GM10248 (cell line): ENCODE measurements at regions of chr19 and their contacts with region 1.

Region 1: GRCh38 chr19:35740423-35741202 is 1.6 kb downstream of the IGFLR1 start:
- DNase-seq: peak; percentile 98
- CTCF ChIP-seq: peak; percentile 37

Region 2: DNA sequence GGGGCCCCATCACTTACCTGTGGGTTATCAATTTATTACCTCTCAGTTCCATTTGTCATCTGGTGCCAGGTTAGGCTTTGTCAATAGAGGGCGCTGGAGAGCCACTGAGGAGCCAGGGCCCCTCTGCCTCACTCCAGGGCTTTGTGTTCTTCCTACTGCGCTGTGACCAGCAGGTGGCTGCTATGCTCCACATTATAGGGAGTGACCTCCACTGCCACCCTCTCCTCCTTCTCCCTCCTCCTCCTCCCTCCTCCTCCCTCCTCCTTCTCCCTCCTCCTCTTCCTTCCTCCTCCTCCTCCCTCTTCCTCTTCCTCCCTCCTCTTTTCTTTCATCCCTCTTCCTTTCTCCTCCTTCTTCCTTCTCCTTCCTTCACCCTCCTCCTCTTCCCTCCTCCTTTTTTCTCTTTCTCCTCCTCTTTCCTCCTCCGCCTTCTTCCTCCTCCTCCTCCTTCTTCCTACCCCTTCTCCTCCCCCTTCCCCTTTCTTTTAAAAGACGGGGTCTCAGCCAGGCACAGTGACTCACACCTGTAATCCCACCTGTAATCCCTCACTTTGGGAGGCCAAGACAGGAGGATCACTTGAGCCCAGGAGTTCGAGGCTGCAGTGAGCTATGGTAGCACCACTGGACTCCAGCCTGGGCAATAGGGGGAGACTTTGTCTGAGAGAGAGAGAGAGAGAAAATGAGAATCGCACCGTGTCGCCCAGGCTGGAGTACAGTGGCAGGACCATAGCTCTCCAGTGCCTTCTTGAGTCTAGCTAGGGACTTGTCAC is 46.6 kb before region 1 on chr19:
- CTCF ChIA-PET with region 1: interaction called, 14 read pairs
- POLR2A ChIA-PET with region 1: interaction called, 6 read pairs
- DNase-seq: peak; percentile 88
- CTCF ChIP-seq: peak; percentile 99

Region 3: DNA sequence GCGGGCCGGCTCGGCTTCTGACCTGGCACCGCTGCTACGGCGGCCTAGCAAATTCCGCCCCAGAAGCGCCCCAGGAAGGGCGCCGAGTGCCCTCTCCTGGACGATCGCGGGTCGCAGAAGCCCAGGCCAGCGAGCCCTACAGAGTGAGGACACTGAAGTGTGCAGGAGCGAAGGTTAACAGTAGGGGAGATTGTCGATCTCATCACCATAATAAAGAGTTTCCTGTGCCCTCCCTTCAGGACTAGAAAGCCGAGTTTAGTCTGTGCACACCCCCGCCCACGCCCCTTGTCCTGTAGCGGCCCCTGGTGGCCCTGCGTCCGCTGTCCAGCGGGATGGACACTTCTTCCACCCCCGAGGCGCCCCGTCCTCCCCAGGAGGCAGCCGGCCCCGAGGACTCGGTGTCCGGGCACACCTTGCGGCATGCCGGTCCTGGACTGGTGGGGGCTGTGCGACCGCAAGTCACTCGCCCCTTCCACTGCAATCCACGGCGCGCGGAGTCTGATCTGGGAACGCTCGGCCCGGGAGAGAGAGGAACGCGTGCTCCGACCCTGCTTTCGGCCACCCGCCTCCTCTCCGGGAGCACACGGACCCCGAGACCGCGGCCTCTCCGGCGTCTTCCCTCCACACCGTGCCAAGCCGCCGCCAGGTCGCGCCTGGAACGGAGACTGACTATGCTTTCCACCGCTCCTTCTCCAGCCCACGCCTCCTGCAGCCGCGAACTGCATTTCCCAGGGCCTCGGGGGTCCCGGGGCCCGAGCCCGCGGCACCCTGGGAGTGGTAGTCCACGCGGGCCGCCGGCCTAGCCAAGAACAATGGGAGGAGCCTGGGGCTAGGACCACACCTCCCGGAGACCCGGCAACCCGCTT is 23.6 kb before region 1 on chr19:
- CTCF ChIA-PET with region 1: interaction called, 5 read pairs
- POLR2A ChIA-PET with region 1: interaction called, 10 read pairs
- DNase-seq: peak; percentile 78
- CTCF ChIP-seq: peak; percentile 78

Region 4: GRCh38 chr19:35727053-35727947 is 13.3 kb before region 1 on chr19:
- CTCF ChIA-PET with region 1: interaction called, 20 read pairs
- POLR2A ChIA-PET with region 1: interaction called, 20 read pairs
- DNase-seq: no peak
- CTCF ChIP-seq: no peak

Region 5: DNA sequence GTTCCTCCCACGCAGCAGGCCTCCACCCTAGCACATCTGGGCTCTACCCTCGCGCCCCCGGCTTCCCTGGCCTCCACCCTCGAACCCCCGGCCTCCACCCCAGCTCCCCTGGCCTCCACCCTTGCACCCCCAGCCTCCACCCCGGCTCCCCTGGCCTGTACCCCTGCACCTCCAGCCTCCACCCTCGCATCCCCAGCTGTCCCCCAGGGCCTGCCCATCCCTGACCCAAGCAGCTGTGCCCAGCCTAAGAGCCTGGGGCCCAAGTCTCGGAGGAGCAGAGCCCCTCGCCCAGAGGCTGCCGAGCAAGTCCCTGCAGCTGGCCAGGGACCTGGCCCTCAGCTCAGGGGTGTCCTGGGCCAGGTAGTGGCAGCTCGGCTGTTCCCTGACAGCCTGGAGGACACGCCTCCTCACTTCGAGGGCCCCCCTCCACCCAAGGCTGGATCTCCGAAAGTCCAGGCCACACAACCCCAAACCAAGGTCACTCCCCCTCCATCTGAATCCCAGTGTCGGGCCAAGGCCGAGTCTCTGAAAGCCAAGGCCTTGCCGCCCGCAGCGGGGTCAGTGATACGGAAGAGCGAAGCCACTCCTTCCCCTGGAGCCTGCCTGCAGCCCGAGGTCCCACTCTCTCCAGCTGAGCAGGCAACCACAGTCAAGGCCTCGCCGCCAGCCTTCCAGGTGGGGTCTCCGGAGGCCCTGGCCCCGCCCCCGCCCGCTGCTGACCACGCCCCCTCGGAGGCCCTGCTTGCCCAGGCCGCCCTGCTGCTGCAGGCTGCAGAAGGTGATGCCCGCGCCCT is 26.9 kb after region 1 on chr19:
- CTCF ChIA-PET with region 1: no interaction called
- POLR2A ChIA-PET with region 1: no interaction called
- DNase-seq: peak; percentile 28
- CTCF ChIP-seq: no peak